Stomach (tissue), 19 donors: ENCODE measurements at regions of chr6 and their contacts with region 1.

Region 1: GRCh38 chr6:148342357-148343046 is at the start of gene SASH1:
- DNase-seq: peak; percentile 57 to 87
- H3K4me3 ChIP-seq: peak within 1 kb of the TSS; percentile 63 to 73 (median 64)
- H3K27ac ChIP-seq: peak within 1 kb of the TSS; percentile 84 to 89 (median 86)
- H3K4me1 ChIP-seq: peaks cover 6 to 42% (median 20%) of the 10 kb centered on the region in 4 donors
- H3K27me3 ChIP-seq: peaks cover 0 to 7% (median 0%) of the 10 kb centered on the region in 3 donors
- CTCF ChIP-seq: no peak
- EP300 ChIP-seq: no peak
- POLR2A ChIP-seq: peak in 1 of 4 donors; percentile 30
- total RNA-seq, gene SASH1: 14.0 to 82.6 (median 19.4) TPM

Region 2: DNA sequence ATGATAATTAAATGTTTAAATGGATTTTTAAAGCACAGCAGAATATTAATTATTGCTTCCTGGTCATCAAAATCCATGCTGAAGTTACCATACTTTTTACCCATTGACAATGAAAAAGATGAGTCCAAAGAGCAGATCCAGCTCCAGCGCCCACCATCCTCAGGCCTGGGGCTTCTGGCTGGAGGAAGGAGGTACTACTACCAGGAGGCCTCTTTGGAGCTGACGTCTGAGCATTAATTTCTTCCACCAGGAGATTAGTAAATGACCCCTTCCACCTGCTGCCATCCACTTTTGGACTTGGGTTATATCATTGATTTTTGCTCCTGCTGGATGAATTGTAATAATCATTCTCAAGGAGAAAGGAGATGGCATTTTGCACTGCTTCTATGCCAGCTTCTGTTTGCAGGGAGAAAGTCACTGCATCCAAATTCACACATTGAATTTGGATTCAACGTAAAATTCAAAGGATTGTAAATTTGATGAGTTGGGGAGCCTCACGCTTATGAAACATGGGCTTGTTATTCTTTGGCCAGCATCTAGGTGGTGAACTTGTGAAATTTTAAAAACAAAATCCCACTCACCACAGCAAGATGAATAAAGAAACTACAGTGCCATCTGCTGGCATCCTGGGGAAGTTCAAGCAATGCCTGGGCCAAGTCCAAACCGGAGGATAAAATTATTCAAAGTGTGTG is 122.0 kb after region 1 on chr6:
- intact Hi-C with region 1: loop called (anchors 10 kb)
- DNase-seq: peak; percentile 60 to 88
- H3K4me3 ChIP-seq: no peak overlapping the region
- H3K27ac ChIP-seq: no peak overlapping the region
- H3K4me1 ChIP-seq: peaks cover 0 to 22% (median 11%) of the 10 kb centered on the region in 4 donors
- H3K27me3 ChIP-seq: no peaks in the 10 kb centered on the region
- CTCF ChIP-seq: peak in 5 of 7 experiments; percentile 63 to 94 (median 91)
- EP300 ChIP-seq: no peak
- POLR2A ChIP-seq: no peak

Region 3: GRCh38 chr6:148947621-148948444 is 605.3 kb after region 1 on chr6:
- intact Hi-C with region 1: no loop called
- DNase-seq: peak; percentile 88 to 95
- H3K4me3 ChIP-seq: no peak overlapping the region
- H3K27ac ChIP-seq: peak overlapping the region in 1 of 5 donors; percentile 73
- H3K4me1 ChIP-seq: peaks cover 0 to 26% (median 5%) of the 10 kb centered on the region in 4 donors
- H3K27me3 ChIP-seq: no peaks in the 10 kb centered on the region
- CTCF ChIP-seq: peak in 5 of 7 experiments; percentile 75 to 90 (median 87)
- EP300 ChIP-seq: no peak
- POLR2A ChIP-seq: no peak